Gastrocnemius medialis (tissue), 4 donors: ENCODE measurements at regions of chr6 and their contacts with region 1.

Region 1: GRCh38 chr6:32838114-32838958 is at the start of gene TAP2:
- DNase-seq: peak; percentile 87 to 92
- ATAC-seq: peak; percentile 91 to 95
- H3K4me3 ChIP-seq: peak within 1 kb of the TSS; percentile 66 to 86 (median 80)
- H3K27ac ChIP-seq: peak within 1 kb of the TSS; percentile 84 to 90 (median 90)
- H3K4me1 ChIP-seq: peaks cover 7% of the 10 kb centered on the region in 2 donors
- H3K27me3 ChIP-seq: no peaks in the 10 kb centered on the region
- CTCF ChIP-seq: peak; percentile 97 to 98 (median 98)
- POLR2A ChIP-seq: peak; percentile 24 to 44
- total RNA-seq, gene TAP2: 2.5 to 7.1 (median 4.1) TPM

Region 2: GRCh38 chr6:32779036-32779435 is 59.3 kb before region 1 on chr6:
- in situ Hi-C with region 1: no loop called
- intact Hi-C with region 1: no loop called
- DNase-seq: no peak
- ATAC-seq: no peak
- H3K4me3 ChIP-seq: no peak overlapping the region
- H3K27ac ChIP-seq: no peak overlapping the region
- H3K4me1 ChIP-seq: no peaks in the 10 kb centered on the region
- H3K27me3 ChIP-seq: peaks cover 0 to 3% (median 0%) of the 10 kb centered on the region in 3 donors
- CTCF ChIP-seq: no peak
- POLR2A ChIP-seq: no peak

Region 3: GRCh38 chr6:32853541-32854375 is 15.4 kb after region 1 on chr6 and contains the starts of genes PSMB9 and TAP1:
- in situ Hi-C with region 1: no loop called
- intact Hi-C with region 1: loop called (anchors 1 kb)
- DNase-seq: peak; percentile 94 to 95
- ATAC-seq: peak; percentile 94 to 95
- H3K4me3 ChIP-seq: peak within 1 kb of the TSS; percentile 85 to 99 (median 96)
- H3K27ac ChIP-seq: peak within 1 kb of the TSS; percentile 98 to 99 (median 99)
- H3K4me1 ChIP-seq: peaks cover 12 to 19% of the 10 kb centered on the region in 2 donors
- H3K27me3 ChIP-seq: no peaks in the 10 kb centered on the region
- CTCF ChIP-seq: peak; percentile 83 to 90 (median 89)
- POLR2A ChIP-seq: peak; percentile 89 to 92
- total RNA-seq, gene PSMB9: 1.4 to 11.3 (median 6.1) TPM
- total RNA-seq, gene TAP1: 13.2 to 26.7 (median 19.0) TPM

Region 4: GRCh38 chr6:32883789-32884188 is 45.5 kb after region 1 on chr6:
- in situ Hi-C with region 1: no loop called
- intact Hi-C with region 1: no loop called
- DNase-seq: peak; percentile 20 to 68
- ATAC-seq: peak; percentile 73 to 96
- H3K4me3 ChIP-seq: no peak overlapping the region
- H3K27ac ChIP-seq: peak overlapping the region in 1 of 4 donors; percentile 36
- H3K4me1 ChIP-seq: peaks cover 5 to 9% of the 10 kb centered on the region in 2 donors
- H3K27me3 ChIP-seq: no peaks in the 10 kb centered on the region
- CTCF ChIP-seq: no peak
- POLR2A ChIP-seq: no peak